Heart right ventricle (tissue), 16 donors: ENCODE measurements at regions of chr7 and their contacts with region 1.

Region 1: GRCh38 chr7:70975754-70976153 is 156.2 kb upstream of the GALNT17 start:
- DNase-seq: no peak
- ATAC-seq: no peak
- H3K4me3 ChIP-seq: no peak overlapping the region
- H3K27ac ChIP-seq: no peak overlapping the region
- H3K4me1 ChIP-seq: no peaks in the 10 kb centered on the region
- H3K27me3 ChIP-seq: no peaks in the 10 kb centered on the region
- CTCF ChIP-seq: no peak

Region 2: GRCh38 chr7:70492625-70493024 is 483.1 kb before region 1 on chr7:
- intact Hi-C with region 1: no loop called
- DNase-seq: no peak
- ATAC-seq: no peak
- H3K4me3 ChIP-seq: no peak overlapping the region
- H3K27ac ChIP-seq: no peak overlapping the region
- H3K4me1 ChIP-seq: peaks cover 0 to 12% (median 9%) of the 10 kb centered on the region in 9 donors
- H3K27me3 ChIP-seq: no peaks in the 10 kb centered on the region
- CTCF ChIP-seq: no peak

Region 3: GRCh38 chr7:70829221-70830059 is 146.3 kb before region 1 on chr7:
- intact Hi-C with region 1: no loop called
- DNase-seq: peak; percentile 57 to 63
- ATAC-seq: peak in 7 of 8 donors; percentile 58 to 81 (median 68)
- H3K4me3 ChIP-seq: peak overlapping the region in 4 of 10 donors; percentile 5 to 36 (median 21)
- H3K27ac ChIP-seq: no peak overlapping the region
- H3K4me1 ChIP-seq: peaks cover 0 to 9% (median 4%) of the 10 kb centered on the region in 9 donors
- H3K27me3 ChIP-seq: peaks cover 0 to 48% (median 10%) of the 10 kb centered on the region in 7 donors
- CTCF ChIP-seq: peak; percentile 36 to 93 (median 88)

Region 4: DNA sequence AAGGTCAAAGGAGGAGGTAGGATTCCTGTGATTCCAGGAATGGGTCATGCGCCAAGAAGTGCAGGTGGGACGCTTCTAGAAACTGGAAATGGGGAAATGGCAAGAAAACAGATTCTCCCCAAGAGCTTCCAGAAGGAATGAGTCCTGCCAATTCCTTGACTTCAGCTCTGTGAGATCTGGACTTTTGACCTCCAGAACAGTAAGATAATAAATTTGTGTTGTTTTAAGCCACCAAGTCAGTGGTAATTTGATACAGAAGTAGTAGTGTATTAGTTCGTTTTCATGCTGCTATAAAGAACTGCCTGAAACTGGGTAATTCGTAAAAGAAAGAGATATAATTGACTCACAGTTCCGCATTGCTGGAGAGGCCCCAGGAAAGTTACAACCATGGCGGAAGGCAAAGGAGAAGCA is 22.4 kb before region 1 on chr7:
- intact Hi-C with region 1: loop called in 5 of 10 experiments (anchors 1 to 2 kb)
- DNase-seq: no peak
- ATAC-seq: no peak
- H3K4me3 ChIP-seq: no peak overlapping the region
- H3K27ac ChIP-seq: no peak overlapping the region
- H3K4me1 ChIP-seq: no peaks in the 10 kb centered on the region
- H3K27me3 ChIP-seq: no peaks in the 10 kb centered on the region
- CTCF ChIP-seq: no peak

Region 5: DNA sequence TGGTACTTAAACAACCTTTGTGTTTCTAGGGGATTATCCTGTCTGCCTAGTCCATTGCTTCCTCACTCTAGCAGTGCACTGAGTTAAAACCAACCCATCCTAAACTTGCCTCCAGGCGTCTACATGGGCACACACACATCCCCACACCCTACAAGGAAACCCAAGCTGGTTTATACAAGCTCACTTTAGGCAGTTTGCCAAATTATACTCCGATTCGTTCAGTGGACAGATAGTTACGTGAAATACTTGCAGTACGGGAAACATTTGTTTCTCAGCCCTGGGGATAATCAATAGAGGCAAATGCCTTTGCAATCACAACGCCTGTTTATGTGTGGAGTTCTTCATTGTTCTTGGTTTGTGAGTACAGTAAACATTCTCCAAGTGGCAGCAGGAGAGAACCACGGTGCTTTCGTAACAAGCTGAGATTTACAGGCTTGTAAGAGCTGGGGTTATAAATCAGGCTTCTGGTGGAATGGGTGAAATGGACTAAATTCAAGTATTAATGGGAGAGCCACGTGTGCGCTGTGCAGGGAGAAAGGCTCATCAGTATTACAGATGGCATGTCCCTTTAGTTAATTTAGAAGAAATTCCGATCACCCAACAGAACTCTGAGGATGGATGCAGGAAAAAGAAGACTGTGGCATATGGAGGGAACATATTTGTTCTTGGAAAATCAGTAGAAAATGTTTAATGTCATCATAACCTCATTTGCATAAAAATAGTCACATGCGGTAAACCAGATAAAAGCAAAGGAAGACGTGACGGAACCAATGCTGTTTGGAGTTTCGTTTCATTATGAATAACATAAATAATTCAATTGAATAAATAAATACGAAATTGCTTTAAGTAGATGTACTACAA is 373.3 kb after region 1 on chr7:
- intact Hi-C with region 1: no loop called
- DNase-seq: no peak
- ATAC-seq: peak in 1 of 8 donors; percentile 33
- H3K4me3 ChIP-seq: no peak overlapping the region
- H3K27ac ChIP-seq: no peak overlapping the region
- H3K4me1 ChIP-seq: peaks cover 0 to 9% (median 0%) of the 10 kb centered on the region in 9 donors
- H3K27me3 ChIP-seq: no peaks in the 10 kb centered on the region
- CTCF ChIP-seq: no peak